ENCODE measurements at regions of chr9 and their contacts with region 1.

Region 1: DNA sequence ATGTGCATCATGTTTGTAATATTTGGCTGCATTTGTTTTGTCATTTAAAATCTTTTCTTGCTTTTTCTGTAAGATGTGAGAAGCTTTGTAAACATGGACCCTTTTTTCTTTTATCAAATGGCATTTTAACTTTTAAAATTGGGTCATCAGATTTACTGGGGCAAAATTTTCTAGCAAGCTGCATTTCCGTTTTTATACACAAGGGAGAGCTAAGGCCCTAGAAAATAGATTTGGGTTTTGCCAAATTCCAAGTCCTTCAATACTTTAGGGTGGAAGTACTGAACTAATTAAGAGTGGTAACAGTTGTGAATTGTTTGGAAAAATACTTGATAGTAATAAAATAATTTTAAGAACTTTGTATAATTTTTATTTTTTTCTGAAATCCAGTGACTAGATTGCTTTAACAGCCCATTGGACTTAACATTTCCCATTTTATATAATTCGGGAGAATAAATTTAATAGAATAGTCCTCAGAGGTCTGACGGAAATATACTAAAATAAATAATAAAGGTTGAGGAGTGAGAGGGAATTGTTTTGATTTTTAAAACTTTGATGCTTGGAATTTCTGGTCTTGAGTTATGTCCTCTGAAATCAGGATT is 117.4 kb downstream of the SMARCA2 start:
- DNase-seq: no peak
- H3K4me3 Mint-ChIP-seq: no peak overlapping the region
- H3K27ac Mint-ChIP-seq: no peak overlapping the region
- H3K4me1 Mint-ChIP-seq: no peaks in the 10 kb centered on the region
- H3K27me3 Mint-ChIP-seq: no peaks in the 10 kb centered on the region

Region 2: DNA sequence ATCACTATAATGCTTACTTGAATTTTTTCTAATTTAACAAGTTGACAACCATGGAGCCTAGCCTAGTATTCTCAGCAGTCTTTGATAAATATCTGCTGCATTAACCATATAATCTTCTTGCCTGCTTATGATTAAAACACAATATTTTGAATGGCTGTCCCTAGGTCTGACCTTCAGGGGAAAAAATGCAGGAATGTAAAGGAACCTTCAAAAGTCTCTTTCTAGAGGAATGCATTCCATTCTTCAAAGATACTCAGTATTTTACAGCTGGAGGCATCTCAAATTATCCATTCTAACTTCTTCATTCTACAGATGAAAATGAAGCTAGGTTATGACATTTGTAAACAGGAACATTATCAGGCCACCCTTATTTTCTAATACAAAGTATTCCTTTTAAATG is 236.6 kb before region 1 on chr9:
- CTCF ChIA-PET with region 1: no interaction called
- POLR2A ChIA-PET with region 1: no interaction called
- DNase-seq: no peak
- H3K4me3 Mint-ChIP-seq: no peak overlapping the region
- H3K27ac Mint-ChIP-seq: no peak overlapping the region
- H3K4me1 Mint-ChIP-seq: no peaks in the 10 kb centered on the region
- H3K27me3 Mint-ChIP-seq: peaks cover 10% of the 10 kb centered on the region

Region 3: DNA sequence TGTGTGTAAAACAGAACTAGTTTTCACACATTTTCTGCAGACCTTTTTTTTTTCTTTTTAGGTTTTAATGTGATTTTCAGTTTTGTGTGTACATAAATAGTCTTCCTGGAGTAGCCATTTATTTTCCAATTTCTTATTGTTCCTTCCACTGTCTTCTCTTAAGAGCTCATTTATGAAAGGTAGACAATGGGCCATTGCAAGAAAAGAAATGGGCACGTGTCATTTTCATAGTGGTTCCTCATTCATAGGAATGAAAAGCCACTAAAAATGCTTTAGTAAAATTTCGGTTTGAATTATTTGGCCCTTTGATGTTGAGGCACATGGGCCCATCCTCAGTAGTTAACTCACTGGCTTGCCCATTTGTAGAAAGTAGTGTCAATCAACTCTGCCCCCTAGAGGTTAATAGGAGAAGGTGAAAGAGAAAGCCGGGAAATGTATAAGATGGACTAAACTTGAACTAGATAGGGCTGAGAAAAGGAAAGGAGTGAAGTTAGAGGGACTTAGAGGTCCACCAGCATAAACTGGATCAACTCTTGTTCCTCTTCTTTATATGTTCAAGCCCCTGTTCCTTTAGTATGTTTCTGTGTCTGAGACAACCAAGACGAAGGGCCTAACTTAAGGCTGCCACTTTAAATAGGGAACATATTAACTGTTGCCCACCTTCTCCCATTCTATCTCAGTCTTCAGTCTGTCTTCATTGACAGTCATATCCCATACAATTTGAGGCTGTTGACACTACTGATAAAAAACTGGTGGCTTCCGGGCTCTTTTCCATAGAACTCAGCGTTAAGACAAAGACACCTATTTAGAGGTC is 44.9 kb before region 1 on chr9:
- CTCF ChIA-PET with region 1: no interaction called
- POLR2A ChIA-PET with region 1: no interaction called
- DNase-seq: no peak
- H3K4me3 Mint-ChIP-seq: no peak overlapping the region
- H3K27ac Mint-ChIP-seq: no peak overlapping the region
- H3K4me1 Mint-ChIP-seq: peaks cover 22% of the 10 kb centered on the region
- H3K27me3 Mint-ChIP-seq: no peaks in the 10 kb centered on the region

Region 4: DNA sequence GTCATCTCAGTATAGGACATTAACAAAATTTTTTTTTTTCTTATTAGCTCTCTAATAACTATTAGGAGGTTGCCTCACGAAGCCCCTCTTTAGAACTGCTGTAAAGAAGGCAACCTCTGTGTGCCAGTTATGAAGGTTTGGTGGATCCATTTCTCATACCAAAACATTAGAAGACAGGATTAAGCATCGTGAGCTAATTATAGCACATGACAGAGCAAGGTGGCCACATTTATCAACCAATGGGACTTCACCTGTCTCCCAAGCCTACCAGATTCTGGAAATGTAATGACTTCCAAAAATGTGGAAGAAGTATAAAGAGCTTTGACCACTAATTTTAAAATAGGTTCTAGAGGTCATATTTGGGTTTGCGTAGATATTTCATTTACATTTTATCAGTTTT is 10.3 kb before region 1 on chr9:
- CTCF ChIA-PET with region 1: interaction called, 10 read pairs
- POLR2A ChIA-PET with region 1: interaction called, 3 read pairs
- DNase-seq: no peak
- H3K4me3 Mint-ChIP-seq: no peak overlapping the region
- H3K27ac Mint-ChIP-seq: no peak overlapping the region
- H3K4me1 Mint-ChIP-seq: peaks cover 24% of the 10 kb centered on the region
- H3K27me3 Mint-ChIP-seq: no peaks in the 10 kb centered on the region

Region 5: GRCh38 chr9:2181792-2182191 is 49.2 kb after region 1 on chr9:
- CTCF ChIA-PET with region 1: interaction called, 17 read pairs
- POLR2A ChIA-PET with region 1: no interaction called
- DNase-seq: no peak
- H3K4me3 Mint-ChIP-seq: no peak overlapping the region
- H3K27ac Mint-ChIP-seq: no peak overlapping the region
- H3K4me1 Mint-ChIP-seq: no peaks in the 10 kb centered on the region
- H3K27me3 Mint-ChIP-seq: no peaks in the 10 kb centered on the region